Mammary epithelial cell (primary cell): ENCODE measurements at regions of chr3 and their contacts with region 1.

Region 1: GRCh38 chr3:107884719-107885460 is 205.9 kb downstream of the CD47 start:
- DNase-seq: peak; percentile 34
- H3K4me3 ChIP-seq: no peak overlapping the region
- H3K27ac ChIP-seq: no peak overlapping the region
- H3K4me1 ChIP-seq: no peaks in the 10 kb centered on the region
- H3K27me3 ChIP-seq: no peaks in the 10 kb centered on the region
- CTCF ChIP-seq: no peak

Region 2: GRCh38 chr3:106097817-106098435 is 1787.0 kb before region 1 on chr3:
- CTCF ChIA-PET with region 1: interaction called, 15 read pairs
- dilution Hi-C with region 1: no loop called
- in situ Hi-C with region 1: no loop called
- intact Hi-C with region 1: no loop called
- DNase-seq: no peak
- H3K4me3 ChIP-seq: no peak overlapping the region
- H3K27ac ChIP-seq: no peak overlapping the region
- H3K4me1 ChIP-seq: no peaks in the 10 kb centered on the region
- H3K27me3 ChIP-seq: no peaks in the 10 kb centered on the region
- CTCF ChIP-seq: no peak